ENCODE measurements at regions of chr2 and their contacts with region 1.

Region 1: GRCh38 chr2:219278655-219279516 is at the start of gene DNAJB2:
- DNase-seq: peak; percentile 99
- ATAC-seq: peak; percentile 76
- H3K4me3 ChIP-seq: peak within 1 kb of the TSS; percentile 49 to 80 (median 77)
- H3K4me3 Mint-ChIP-seq: peak within 1 kb of the TSS; percentile 92
- H3K27ac ChIP-seq: peak within 1 kb of the TSS; percentile 98 to 100
- H3K27ac Mint-ChIP-seq: peak within 1 kb of the TSS; percentile 96
- H3K4me1 ChIP-seq: peaks cover 32 to 48% of the 10 kb centered on the region in 2 donors
- H3K4me1 Mint-ChIP-seq: peaks cover 48% of the 10 kb centered on the region
- H3K27me3 ChIP-seq: no peaks in the 10 kb centered on the region
- H3K27me3 Mint-ChIP-seq: no peaks in the 10 kb centered on the region
- CTCF ChIP-seq: no peak
- total RNA-seq, gene DNAJB2: 169 and 184 TPM in 2 replicates

Region 2: DNA sequence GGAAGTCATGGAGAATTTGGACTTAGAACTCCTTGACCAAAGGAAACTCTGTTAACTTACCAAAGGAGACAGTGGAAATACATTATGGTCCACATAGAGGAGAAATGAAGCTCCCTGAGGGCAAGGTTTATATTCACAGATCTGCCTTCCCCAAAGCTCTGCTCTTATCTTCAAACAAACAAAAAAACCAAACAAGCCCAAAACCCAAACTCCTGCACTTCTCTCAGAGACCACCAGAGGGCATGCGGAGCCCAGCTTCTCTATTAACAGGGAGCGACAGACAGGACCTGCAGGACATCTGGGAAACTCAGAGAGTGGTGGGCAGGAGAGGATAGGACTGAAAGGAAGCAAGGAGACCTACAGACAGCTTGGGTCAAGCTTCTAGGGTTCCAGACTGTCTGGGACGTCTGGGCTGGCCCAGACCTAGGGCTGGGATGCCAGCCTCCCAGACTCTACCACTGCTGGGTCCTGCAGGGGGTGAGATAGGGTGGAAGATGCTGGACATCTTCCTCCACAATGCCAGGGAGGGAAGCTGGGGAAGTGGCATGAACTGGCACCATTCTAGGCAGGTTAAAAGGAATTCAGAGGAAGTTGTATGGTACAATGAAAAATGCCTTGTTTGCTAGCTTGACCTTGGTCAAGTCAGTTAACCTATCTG is 402.2 kb before region 1 on chr2:
- CTCF ChIA-PET with region 1: interaction called, 3 read pairs
- POLR2A ChIA-PET with region 1: interaction called, 9 read pairs
- intact Hi-C with region 1: loop called (anchors 2 kb)
- DNase-seq: peak; percentile 87
- ATAC-seq: no peak
- H3K4me3 ChIP-seq: no peak overlapping the region
- H3K4me3 Mint-ChIP-seq: peak overlapping the region; percentile 2
- H3K27ac ChIP-seq: no peak overlapping the region
- H3K27ac Mint-ChIP-seq: peak overlapping the region; percentile 23
- H3K4me1 ChIP-seq: peaks cover 54 to 70% of the 10 kb centered on the region in 2 donors
- H3K4me1 Mint-ChIP-seq: peaks cover 59% of the 10 kb centered on the region
- H3K27me3 ChIP-seq: peaks cover 0 to 40% (median 17%) of the 10 kb centered on the region in 4 experiments
- H3K27me3 Mint-ChIP-seq: peaks cover 19% of the 10 kb centered on the region
- CTCF ChIP-seq: peak; percentile 94

Region 3: GRCh38 chr2:219206442-219207253 is 72.2 kb before region 1 on chr2 and contains the start of gene ZFAND2B:
- CTCF ChIA-PET with region 1: interaction called, 18 read pairs
- POLR2A ChIA-PET with region 1: interaction called, 15 read pairs
- intact Hi-C with region 1: loop called (anchors 1 kb)
- DNase-seq: peak; percentile 97
- ATAC-seq: peak; percentile 91
- H3K4me3 ChIP-seq: peak within 1 kb of the TSS; percentile 53 to 82 (median 76)
- H3K4me3 Mint-ChIP-seq: peak within 1 kb of the TSS; percentile 96
- H3K27ac ChIP-seq: peak within 1 kb of the TSS; percentile 84 to 94
- H3K27ac Mint-ChIP-seq: peak within 1 kb of the TSS; percentile 98
- H3K4me1 ChIP-seq: peaks cover 16 to 23% of the 10 kb centered on the region in 2 donors
- H3K4me1 Mint-ChIP-seq: peaks cover 28% of the 10 kb centered on the region
- H3K27me3 ChIP-seq: no peaks in the 10 kb centered on the region
- H3K27me3 Mint-ChIP-seq: no peaks in the 10 kb centered on the region
- CTCF ChIP-seq: no peak
- total RNA-seq, gene ZFAND2B: 55.2 and 58.7 TPM in 2 replicates

Region 4: GRCh38 chr2:219229305-219230058 is 49.4 kb before region 1 on chr2 and contains the starts of genes ANKZF1 and ATG9A:
- CTCF ChIA-PET with region 1: interaction called, 15 read pairs
- POLR2A ChIA-PET with region 1: interaction called, 12 read pairs
- intact Hi-C with region 1: loop called (anchors 1 kb)
- DNase-seq: peak; percentile 98
- ATAC-seq: peak; percentile 97
- H3K4me3 ChIP-seq: peak within 1 kb of the TSS; percentile 86 to 98 (median 92)
- H3K4me3 Mint-ChIP-seq: peak within 1 kb of the TSS; percentile 99
- H3K27ac ChIP-seq: peak within 1 kb of the TSS; percentile 74 to 87
- H3K27ac Mint-ChIP-seq: peak within 1 kb of the TSS; percentile 98
- H3K4me1 ChIP-seq: peaks cover 17 to 23% of the 10 kb centered on the region in 2 donors
- H3K4me1 Mint-ChIP-seq: peaks cover 38% of the 10 kb centered on the region
- H3K27me3 ChIP-seq: no peaks in the 10 kb centered on the region
- H3K27me3 Mint-ChIP-seq: no peaks in the 10 kb centered on the region
- CTCF ChIP-seq: no peak
- total RNA-seq, gene ANKZF1: 181 and 199 TPM in 2 replicates
- total RNA-seq, gene ATG9A: 59.4 and 65.5 TPM in 2 replicates

Region 5: DNA sequence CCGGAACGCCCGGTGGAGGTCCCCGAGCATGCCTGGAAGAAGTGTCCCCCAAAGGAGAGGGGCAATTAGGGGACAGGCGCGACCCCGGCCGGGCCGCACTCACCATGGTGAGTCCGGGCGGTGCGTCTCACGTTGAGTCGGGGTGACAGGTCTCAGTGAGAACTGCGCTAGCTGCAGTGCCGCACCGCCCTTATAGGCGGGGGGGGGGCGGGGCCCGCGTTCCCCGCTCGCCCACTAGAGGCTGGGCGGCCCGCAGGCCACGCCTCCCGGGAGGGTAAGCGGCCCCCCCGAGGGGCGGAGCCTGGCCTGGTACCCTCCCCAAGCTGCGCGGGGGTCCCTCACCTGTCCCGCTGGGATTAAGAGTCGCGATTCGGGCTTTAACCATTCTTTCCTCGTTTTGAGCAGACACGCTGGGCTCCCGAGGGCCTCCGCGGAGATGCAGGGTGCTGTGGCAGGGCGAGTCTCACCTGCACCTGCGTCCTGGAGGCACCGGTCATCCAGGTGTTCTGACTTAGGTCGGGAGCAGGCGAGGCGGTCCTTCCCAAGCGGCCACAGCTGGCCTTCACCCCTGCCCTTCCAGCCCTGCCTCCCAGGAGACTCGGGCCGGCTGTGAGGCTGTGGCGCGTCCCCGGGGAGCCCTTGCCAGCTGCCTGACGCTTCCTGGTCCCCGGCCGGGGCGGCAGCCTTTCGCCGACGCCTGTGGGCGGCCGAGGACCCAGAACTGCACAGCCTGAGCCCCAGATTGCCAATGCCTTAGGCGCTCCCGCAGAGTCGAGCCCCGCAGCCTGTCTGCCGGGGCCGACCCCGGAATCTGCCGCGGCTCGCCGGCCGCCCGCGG is 24.9 kb before region 1 on chr2 and contains the start of gene TUBA4A:
- CTCF ChIA-PET with region 1: interaction called, 97 read pairs
- POLR2A ChIA-PET with region 1: interaction called, 106 read pairs
- intact Hi-C with region 1: loop called (anchors 1 kb)
- DNase-seq: peak; percentile 93
- ATAC-seq: peak; percentile 72
- H3K4me3 ChIP-seq: peak within 1 kb of the TSS; percentile 83 to 97 (median 90)
- H3K4me3 Mint-ChIP-seq: peak within 1 kb of the TSS; percentile 87
- H3K27ac ChIP-seq: peak within 1 kb of the TSS; percentile 93 to 94
- H3K27ac Mint-ChIP-seq: peak within 1 kb of the TSS; percentile 96
- H3K4me1 ChIP-seq: peaks cover 34 to 44% of the 10 kb centered on the region in 2 donors
- H3K4me1 Mint-ChIP-seq: peaks cover 49% of the 10 kb centered on the region
- H3K27me3 ChIP-seq: no peaks in the 10 kb centered on the region
- H3K27me3 Mint-ChIP-seq: no peaks in the 10 kb centered on the region
- CTCF ChIP-seq: no peak
- total RNA-seq, gene TUBA4A: 196 and 213 TPM in 2 replicates

Region 6: DNA sequence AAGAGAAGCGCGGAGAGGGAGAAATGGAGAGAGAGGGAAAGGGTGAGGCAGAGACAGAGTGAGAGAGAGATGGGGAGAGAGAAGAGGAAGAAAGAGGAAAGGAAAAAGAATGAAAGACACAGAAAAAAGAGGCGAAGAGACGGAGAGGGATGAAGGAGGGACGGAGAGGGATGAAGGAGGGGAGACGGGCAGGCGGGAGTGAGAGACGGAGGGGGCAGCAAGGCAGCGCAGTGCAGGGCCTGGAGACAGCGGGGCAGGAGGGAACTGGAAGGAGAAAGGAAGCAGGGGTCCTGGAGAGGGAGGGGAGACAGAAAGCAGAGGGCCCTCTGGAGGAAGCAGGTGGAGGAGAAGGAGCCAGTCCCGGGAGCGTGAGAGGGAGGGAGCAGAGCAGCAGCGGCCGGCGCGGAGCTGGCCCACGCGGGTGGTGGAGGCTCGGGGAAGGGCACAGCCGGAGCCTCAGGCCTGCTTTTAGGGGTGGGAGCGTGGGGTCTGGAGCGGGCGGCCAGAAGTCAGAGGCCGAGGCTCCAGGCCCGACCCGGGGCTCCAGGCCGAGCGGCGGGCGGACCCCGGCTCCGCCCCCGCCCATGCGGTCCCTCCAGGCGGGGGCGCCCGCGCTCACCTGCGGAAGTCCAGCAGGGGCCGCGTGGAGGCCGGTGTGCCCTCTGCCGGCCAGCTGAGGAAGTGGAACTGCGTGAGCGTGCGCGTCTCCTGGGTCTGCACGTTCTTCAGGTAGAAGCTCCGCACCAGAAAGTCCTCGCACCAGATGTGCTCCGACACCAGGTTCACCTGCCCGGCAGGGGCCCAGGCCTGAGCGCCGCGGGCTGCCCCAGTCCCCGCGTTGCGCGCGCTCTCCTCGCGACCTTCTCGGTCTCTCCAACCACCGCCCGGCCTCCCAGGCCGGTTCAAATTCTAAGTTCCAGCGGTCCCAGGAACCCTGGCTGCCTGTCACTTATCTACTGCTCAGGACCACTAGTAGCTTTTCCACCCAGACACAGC is 15.8 kb after region 1 on chr2:
- CTCF ChIA-PET with region 1: interaction called, 239 read pairs
- POLR2A ChIA-PET with region 1: interaction called, 42 read pairs
- intact Hi-C with region 1: loop called (anchors 1 kb)
- DNase-seq: peak; percentile 95
- ATAC-seq: peak; percentile 97
- H3K4me3 ChIP-seq: peak overlapping the region in 4 of 5 experiments; percentile 48 to 67 (median 60)
- H3K4me3 Mint-ChIP-seq: peak overlapping the region; percentile 80
- H3K27ac ChIP-seq: peak overlapping the region; percentile 62 to 74
- H3K27ac Mint-ChIP-seq: peak overlapping the region; percentile 74
- H3K4me1 ChIP-seq: peaks cover 14 to 19% of the 10 kb centered on the region in 2 donors
- H3K4me1 Mint-ChIP-seq: peaks cover 16% of the 10 kb centered on the region
- H3K27me3 ChIP-seq: peaks cover 0 to 7% (median 1%) of the 10 kb centered on the region in 4 experiments
- H3K27me3 Mint-ChIP-seq: no peaks in the 10 kb centered on the region
- CTCF ChIP-seq: peak; percentile 99

Region 7: DNA sequence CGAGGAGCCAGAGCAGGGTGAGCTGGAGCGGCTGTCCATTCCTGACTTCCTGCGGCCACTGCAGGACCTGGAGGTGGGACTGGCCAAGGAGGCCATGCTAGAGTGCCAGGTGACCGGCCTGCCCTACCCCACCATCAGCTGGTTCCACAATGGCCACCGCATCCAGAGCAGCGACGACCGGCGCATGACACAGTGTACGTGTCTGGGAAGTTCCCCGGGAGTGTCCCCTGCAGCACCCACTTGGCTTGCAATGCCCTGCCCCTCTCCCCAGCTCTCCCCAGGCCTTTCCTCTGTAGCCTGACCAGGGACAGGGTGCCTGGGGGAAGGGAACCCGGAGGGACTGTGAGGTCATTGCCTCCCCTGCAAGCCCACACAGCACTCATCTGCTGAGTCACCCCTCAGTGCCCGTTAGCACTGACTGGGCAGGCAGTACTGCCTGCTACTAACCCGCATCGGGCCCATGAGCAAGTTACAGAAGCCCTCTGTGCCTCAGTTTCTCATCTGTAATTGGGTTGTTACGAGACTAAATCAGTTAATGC is 190.4 kb after region 1 on chr2:
- CTCF ChIA-PET with region 1: no interaction called
- POLR2A ChIA-PET with region 1: no interaction called
- intact Hi-C with region 1: no loop called
- DNase-seq: no peak
- ATAC-seq: no peak
- H3K4me3 ChIP-seq: no peak overlapping the region
- H3K4me3 Mint-ChIP-seq: no peak overlapping the region
- H3K27ac ChIP-seq: no peak overlapping the region
- H3K27ac Mint-ChIP-seq: no peak overlapping the region
- H3K4me1 ChIP-seq: no peaks in the 10 kb centered on the region
- H3K4me1 Mint-ChIP-seq: no peaks in the 10 kb centered on the region
- H3K27me3 ChIP-seq: peaks cover 0 to 3% (median 0%) of the 10 kb centered on the region in 4 experiments
- H3K27me3 Mint-ChIP-seq: peaks cover 20% of the 10 kb centered on the region
- CTCF ChIP-seq: no peak

Region 8: GRCh38 chr2:219597552-219598307 is 318.8 kb after region 1 on chr2 and contains the start of gene STK11IP:
- CTCF ChIA-PET with region 1: no interaction called
- POLR2A ChIA-PET with region 1: no interaction called
- intact Hi-C with region 1: loop called (anchors 10 kb)
- DNase-seq: peak; percentile 96
- ATAC-seq: peak; percentile 88
- H3K4me3 ChIP-seq: peak within 1 kb of the TSS; percentile 69 to 88 (median 86)
- H3K4me3 Mint-ChIP-seq: peak within 1 kb of the TSS; percentile 98
- H3K27ac ChIP-seq: peak within 1 kb of the TSS; percentile 59 to 88
- H3K27ac Mint-ChIP-seq: peak within 1 kb of the TSS; percentile 98
- H3K4me1 ChIP-seq: peaks cover 10 to 12% of the 10 kb centered on the region in 2 donors
- H3K4me1 Mint-ChIP-seq: peaks cover 23% of the 10 kb centered on the region
- H3K27me3 ChIP-seq: peaks cover 0 to 11% (median 0%) of the 10 kb centered on the region in 4 experiments
- H3K27me3 Mint-ChIP-seq: peaks cover 10% of the 10 kb centered on the region
- CTCF ChIP-seq: no peak
- total RNA-seq, gene STK11IP: 55.6 and 60.8 TPM in 2 replicates